ENCODE measurements at regions of chr14 and their contacts with region 1.

Region 1: GRCh38 chr14:72904840-72905561 is 11.1 kb upstream of the DPF3 start:
- DNase-seq: no peak
- ATAC-seq: peak; percentile 96
- H3K4me3 ChIP-seq: no peak overlapping the region
- H3K27ac ChIP-seq: no peak overlapping the region
- H3K4me1 ChIP-seq: no peaks in the 10 kb centered on the region
- H3K27me3 ChIP-seq: no peaks in the 10 kb centered on the region
- CTCF ChIP-seq: peak; percentile 95

Region 2: DNA sequence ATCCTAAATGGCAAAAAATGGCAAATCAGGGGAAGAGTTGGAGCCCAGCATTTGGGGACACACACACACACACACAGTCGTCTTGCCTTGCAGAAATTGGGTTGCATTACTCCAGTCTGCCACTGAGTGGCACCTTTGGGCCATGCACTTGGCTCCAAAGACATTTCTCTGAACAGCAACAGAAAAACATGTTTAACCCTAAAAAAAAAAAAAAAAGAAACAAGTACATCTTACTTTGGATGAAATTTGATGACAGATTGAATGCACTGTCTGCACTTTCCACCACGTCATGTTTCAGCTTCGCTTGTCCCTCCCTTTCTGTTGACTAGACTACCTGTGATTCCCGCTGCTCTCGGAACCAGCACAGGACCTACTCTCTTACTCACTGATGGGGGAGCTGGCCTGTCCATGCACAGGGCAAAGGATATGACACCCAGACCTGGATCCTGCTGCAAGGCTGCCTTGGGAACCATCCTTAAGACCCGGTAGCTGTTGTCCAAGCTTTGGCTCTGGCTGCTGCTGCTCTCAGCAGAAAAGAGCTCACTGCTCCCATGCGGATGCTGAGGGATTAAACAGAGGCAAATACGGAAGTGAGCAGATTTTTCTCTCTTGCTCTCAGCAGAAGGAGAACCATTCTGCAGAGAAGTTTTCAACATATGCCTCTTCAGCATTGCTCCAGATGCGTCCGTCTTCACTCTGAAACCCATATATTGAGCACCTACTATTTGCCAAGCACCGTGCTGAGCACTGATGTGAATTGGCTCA is 387.9 kb before region 1 on chr14:
- intact Hi-C with region 1: loop called (anchors 5 kb)
- DNase-seq: no peak
- ATAC-seq: peak; percentile 83
- H3K4me3 ChIP-seq: no peak overlapping the region
- H3K27ac ChIP-seq: no peak overlapping the region
- H3K4me1 ChIP-seq: no peaks in the 10 kb centered on the region
- H3K27me3 ChIP-seq: no peaks in the 10 kb centered on the region
- CTCF ChIP-seq: peak; percentile 84

Region 3: GRCh38 chr14:73014105-73014504 is 109.1 kb after region 1 on chr14:
- intact Hi-C with region 1: no loop called
- DNase-seq: no peak
- ATAC-seq: no peak
- H3K4me3 ChIP-seq: no peak overlapping the region
- H3K27ac ChIP-seq: no peak overlapping the region
- H3K4me1 ChIP-seq: no peaks in the 10 kb centered on the region
- H3K27me3 ChIP-seq: no peaks in the 10 kb centered on the region
- CTCF ChIP-seq: no peak